ENCODE measurements at regions of chr18 and their contacts with region 1.

Region 1: GRCh38 chr18:49094979-49095632 is 144.3 kb upstream of the SMAD7 start:
- DNase-seq: no peak
- H3K4me3 Mint-ChIP-seq: no peak overlapping the region
- H3K27ac Mint-ChIP-seq: no peak overlapping the region
- H3K4me1 Mint-ChIP-seq: peaks cover 12% of the 10 kb centered on the region
- H3K27me3 Mint-ChIP-seq: no peaks in the 10 kb centered on the region

Region 2: GRCh38 chr18:49021433-49022129 is 73.5 kb before region 1 on chr18:
- intact Hi-C with region 1: no loop called
- DNase-seq: peak; percentile 38
- H3K4me3 Mint-ChIP-seq: no peak overlapping the region
- H3K27ac Mint-ChIP-seq: no peak overlapping the region
- H3K4me1 Mint-ChIP-seq: peaks cover 6% of the 10 kb centered on the region
- H3K27me3 Mint-ChIP-seq: no peaks in the 10 kb centered on the region

Region 3: DNA sequence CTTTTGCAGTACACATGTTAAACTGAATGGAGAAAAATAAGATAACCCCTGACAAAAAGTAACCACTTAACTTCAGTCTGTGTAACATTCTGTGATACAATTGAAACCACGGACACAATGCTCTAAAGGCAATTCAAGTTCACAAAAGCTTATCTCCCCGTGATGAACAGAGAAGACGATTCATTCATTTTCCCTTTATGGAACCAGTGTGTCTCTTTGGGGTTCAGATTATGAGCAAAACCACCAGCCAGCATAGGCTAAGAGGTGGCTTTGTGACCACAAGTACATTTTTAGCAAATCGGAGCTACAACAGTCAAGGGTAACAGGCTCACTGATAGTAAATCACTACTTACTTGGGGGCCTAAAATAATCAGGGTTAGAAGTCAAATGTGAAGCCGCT is 23.8 kb before region 1 on chr18:
- intact Hi-C with region 1: loop called (anchors 1 kb)
- DNase-seq: no peak
- H3K4me3 Mint-ChIP-seq: no peak overlapping the region
- H3K27ac Mint-ChIP-seq: peak overlapping the region; percentile 28
- H3K4me1 Mint-ChIP-seq: peaks cover 34% of the 10 kb centered on the region
- H3K27me3 Mint-ChIP-seq: no peaks in the 10 kb centered on the region

Region 4: GRCh38 chr18:49431165-49431962 is 336.3 kb after region 1 on chr18:
- intact Hi-C with region 1: no loop called
- DNase-seq: no peak
- H3K4me3 Mint-ChIP-seq: no peak overlapping the region
- H3K27ac Mint-ChIP-seq: no peak overlapping the region
- H3K4me1 Mint-ChIP-seq: peaks cover 2% of the 10 kb centered on the region
- H3K27me3 Mint-ChIP-seq: no peaks in the 10 kb centered on the region